Ascending aorta (tissue), 2 donors: ENCODE measurements at regions of chr17 and their contacts with region 1.

Region 1: GRCh38 chr17:8435245-8436168 is at the start of gene NDEL1:
- DNase-seq: peak; percentile 96 to 99
- H3K4me3 ChIP-seq: peak within 1 kb of the TSS; percentile 73 to 96
- H3K27ac ChIP-seq: peak within 1 kb of the TSS; percentile 95 to 100
- H3K4me1 ChIP-seq: peaks cover 15 to 38% of the 10 kb centered on the region in 2 donors
- H3K27me3 ChIP-seq: no peaks in the 10 kb centered on the region
- CTCF ChIP-seq: no peak
- total RNA-seq, gene NDEL1: 103 TPM

Region 2: DNA sequence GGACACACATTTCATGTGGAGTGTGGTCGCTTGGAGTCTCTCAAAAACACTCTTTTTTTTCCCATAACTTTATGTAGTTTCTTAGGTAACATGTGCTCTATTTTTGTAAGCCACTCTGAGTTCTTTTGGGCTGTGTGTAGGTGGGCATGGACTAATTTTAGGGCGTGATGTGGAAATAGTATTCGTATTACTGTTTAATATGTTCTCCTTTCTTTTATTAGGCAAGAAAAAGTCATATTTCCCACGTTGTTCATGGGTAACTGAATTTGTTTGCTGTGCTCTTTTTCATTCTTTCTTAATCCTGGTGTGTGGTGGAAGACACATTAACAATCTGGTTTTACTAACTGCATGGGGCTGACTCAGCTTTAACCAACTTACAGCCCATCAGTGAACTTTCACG is 27.6 kb after region 1 on chr17:
- intact Hi-C with region 1: loop called (anchors 1 kb)
- DNase-seq: peak in 1 of 2 donors; percentile 71
- H3K4me3 ChIP-seq: no peak overlapping the region
- H3K27ac ChIP-seq: peak overlapping the region; percentile 64 to 79
- H3K4me1 ChIP-seq: peaks cover 9 to 59% of the 10 kb centered on the region in 2 donors
- H3K27me3 ChIP-seq: no peaks in the 10 kb centered on the region
- CTCF ChIP-seq: no peak